Activated CD8-positive, alpha-beta memory T cell treated with anti-CD3 and anti-CD28 coated beads, Interleukin-2, amount 10 ng/mL, durations not matched to agents 7 days and 5 days (primary cell): ENCODE measurements at regions of chr10 and their contacts with region 1.

Region 1: DNA sequence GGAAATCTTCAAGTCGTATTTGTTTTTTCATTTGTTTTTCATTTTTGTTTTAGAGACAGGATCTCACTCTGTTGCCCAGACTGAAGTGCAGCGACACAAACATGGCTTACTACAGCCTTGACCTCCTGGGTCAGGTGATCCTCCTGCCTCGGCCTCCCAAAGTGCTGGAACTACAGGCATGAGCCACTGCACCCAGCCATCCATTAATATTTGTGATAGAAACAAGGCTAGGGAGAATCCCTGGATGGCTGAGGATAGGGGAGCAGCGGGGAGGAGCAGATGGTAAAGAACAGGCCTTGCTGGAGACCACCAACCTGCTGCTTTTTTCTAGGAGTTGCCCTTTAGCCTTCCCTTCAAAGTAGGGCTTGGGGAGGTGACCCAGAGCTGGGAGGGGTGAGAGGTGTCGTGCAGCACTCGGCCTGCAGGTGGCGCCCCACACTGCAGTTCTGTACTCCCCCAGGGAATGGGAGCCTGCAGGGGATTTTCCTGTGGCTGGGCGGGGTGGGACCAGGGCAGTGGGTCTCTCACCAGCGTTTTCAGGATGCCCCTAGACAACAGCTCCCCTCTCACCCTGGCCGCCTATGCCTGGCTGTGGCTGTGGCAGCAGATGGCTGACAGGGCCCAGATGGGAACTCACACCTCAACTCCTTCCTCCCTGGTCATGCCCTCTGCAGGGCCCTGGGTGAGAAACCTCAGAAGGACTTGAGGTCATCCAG is 12.6 kb upstream of the CDH23 start:
- DNase-seq: peak; percentile 79
- ATAC-seq: peak; percentile 87
- H3K4me3 Mint-ChIP-seq: no peak overlapping the region
- H3K27ac Mint-ChIP-seq: no peak overlapping the region
- H3K4me1 Mint-ChIP-seq: no peaks in the 10 kb centered on the region
- H3K27me3 Mint-ChIP-seq: peaks cover 14% of the 10 kb centered on the region

Region 2: DNA sequence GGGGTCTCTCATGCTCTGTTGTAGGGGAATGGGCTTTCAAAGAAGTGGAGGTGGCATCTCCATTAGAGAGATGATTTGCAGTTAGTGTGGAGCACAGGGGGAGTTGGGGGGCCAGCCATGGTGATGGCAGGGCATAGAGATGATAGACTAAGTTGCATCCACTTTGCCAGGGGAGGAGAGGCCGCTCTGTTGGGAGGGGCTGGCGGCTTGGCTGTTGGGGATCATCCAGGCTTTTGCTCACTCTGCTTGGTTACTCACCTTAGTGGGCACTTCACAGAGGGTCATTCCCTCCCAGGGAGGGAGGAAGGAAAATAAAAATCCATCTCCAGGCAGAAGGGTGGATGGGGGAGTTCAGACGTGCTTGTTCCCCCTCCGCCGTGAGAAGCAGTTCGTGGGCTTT is 18.8 kb before region 1 on chr10:
- CTCF ChIA-PET with region 1: interaction called, 10 read pairs
- DNase-seq: no peak
- ATAC-seq: no peak
- H3K4me3 Mint-ChIP-seq: no peak overlapping the region
- H3K27ac Mint-ChIP-seq: no peak overlapping the region
- H3K4me1 Mint-ChIP-seq: peaks cover 18% of the 10 kb centered on the region
- H3K27me3 Mint-ChIP-seq: no peaks in the 10 kb centered on the region

Region 3: DNA sequence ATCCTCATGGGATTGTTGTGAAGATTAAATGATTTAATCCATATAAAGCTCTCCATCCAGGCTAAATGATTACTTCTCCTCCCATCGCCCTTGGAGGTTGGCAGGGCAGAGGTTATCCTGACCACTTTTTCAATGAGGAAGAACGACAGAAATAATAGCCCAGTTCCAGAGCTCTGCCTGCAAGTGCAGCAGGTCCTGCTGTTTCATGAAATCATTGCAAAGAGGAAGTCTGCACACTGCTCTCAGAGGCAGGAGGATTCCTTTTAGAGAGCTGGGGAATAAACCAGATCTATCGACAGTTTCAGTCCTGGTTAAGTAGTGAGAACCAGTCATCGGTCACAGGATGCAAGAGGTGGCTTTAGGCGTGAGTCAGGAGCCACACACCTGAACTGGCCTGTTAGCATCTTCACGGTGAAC is 12.4 kb before region 1 on chr10:
- CTCF ChIA-PET with region 1: interaction called, 33 read pairs
- DNase-seq: no peak
- ATAC-seq: no peak
- H3K4me3 Mint-ChIP-seq: no peak overlapping the region
- H3K27ac Mint-ChIP-seq: no peak overlapping the region
- H3K4me1 Mint-ChIP-seq: peaks cover 17% of the 10 kb centered on the region
- H3K27me3 Mint-ChIP-seq: peaks cover 2% of the 10 kb centered on the region

Region 4: DNA sequence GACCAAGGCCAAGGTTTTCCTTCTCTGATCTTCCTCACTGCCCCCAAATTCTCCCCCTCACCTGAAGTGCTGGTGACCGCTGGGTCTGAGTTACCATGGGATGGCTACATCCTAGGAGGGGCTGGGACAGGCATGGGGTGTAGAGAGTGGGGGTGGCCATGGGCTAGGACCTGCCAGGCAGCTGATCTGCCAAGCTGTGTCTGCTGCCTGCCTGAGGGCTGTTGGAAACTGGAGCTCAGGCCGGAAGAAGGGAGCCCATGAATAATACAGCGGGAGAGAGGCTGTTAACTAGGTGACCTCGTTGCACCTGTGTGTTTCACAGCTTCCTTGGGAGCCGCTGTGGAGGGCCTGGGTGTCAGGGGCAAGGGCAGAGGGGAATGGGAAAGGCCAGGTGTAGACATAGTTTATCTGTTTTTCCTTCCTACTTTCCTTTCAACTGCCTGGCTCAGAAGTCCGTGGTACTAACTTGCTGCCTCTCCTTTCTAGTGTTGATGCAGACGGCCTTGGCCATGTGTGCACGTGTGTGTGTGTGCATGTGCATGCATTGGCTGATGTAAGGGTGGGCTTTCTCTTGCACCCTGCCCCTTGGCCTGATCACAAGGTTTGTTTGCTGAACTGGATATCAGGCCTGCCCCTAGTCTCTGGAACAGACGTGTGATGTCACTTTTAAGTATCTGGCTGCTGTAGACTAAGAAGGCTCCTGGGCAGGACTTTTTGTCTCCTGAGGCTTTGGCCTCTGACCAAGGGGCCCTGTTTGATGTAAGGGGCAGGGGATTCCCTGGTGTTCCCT is 24.5 kb after region 1 on chr10:
- CTCF ChIA-PET with region 1: no interaction called
- DNase-seq: peak; percentile 26
- ATAC-seq: no peak
- H3K4me3 Mint-ChIP-seq: no peak overlapping the region
- H3K27ac Mint-ChIP-seq: no peak overlapping the region
- H3K4me1 Mint-ChIP-seq: no peaks in the 10 kb centered on the region
- H3K27me3 Mint-ChIP-seq: peaks cover 13% of the 10 kb centered on the region

Region 5: DNA sequence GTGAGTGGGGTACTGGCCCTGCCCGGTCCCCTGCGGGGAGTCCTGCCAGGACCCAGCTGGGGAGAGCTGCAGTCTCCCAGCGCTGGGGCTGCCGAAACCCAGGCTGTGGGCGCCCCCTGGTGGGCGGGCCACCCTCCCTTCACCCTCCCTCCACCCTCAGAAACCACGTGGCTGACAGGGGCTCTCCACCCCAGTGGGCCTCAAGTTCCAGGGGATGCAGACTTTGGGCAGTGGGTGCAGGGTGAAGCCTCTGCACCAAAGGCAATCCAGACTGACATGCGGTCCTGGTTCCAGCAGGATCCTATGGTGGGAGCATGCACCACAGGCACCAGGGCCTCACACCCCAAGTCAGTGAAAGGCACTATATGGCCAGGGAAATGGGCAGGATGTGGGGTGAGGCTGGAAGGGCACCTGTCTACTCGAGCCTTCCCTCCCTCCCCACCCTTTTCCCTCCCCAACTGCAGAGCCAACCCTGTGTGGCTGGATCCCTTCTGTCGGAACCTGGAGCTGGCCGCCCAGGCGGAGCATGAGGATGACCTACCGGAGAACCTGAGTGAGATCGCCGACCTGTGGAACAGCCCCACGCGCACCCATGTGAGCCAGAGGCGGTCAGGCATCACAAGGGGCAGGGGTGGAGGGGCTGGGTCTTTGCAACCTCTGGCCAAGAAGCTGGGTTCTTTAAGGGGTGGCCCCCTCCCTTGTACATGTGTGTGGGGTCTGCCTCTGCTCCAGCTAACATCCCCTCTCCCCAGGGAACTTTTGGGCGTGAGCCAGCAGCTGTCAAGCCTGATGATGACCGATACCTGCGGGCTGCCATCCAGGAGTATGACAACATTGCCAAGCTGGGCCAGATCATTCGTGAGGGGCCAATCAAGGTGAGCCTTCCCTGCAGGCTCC is 428.1 kb after region 1 on chr10:
- CTCF ChIA-PET with region 1: interaction called, 19 read pairs
- DNase-seq: peak; percentile 82
- ATAC-seq: peak; percentile 96
- H3K4me3 Mint-ChIP-seq: no peak overlapping the region
- H3K27ac Mint-ChIP-seq: no peak overlapping the region
- H3K4me1 Mint-ChIP-seq: peaks cover 5% of the 10 kb centered on the region
- H3K27me3 Mint-ChIP-seq: no peaks in the 10 kb centered on the region